ENCODE measurements at regions of chr15 and their contacts with region 1.

Region 1: GRCh38 chr15:78049691-78050440 is 27.6 kb downstream of the TBC1D2B start:
- DNase-seq: peak; percentile 75
- H3K4me3 Mint-ChIP-seq: peak overlapping the region; percentile 54
- H3K27ac Mint-ChIP-seq: peak overlapping the region; percentile 91
- H3K4me1 Mint-ChIP-seq: peaks cover 96% of the 10 kb centered on the region
- H3K27me3 Mint-ChIP-seq: no peaks in the 10 kb centered on the region

Region 2: DNA sequence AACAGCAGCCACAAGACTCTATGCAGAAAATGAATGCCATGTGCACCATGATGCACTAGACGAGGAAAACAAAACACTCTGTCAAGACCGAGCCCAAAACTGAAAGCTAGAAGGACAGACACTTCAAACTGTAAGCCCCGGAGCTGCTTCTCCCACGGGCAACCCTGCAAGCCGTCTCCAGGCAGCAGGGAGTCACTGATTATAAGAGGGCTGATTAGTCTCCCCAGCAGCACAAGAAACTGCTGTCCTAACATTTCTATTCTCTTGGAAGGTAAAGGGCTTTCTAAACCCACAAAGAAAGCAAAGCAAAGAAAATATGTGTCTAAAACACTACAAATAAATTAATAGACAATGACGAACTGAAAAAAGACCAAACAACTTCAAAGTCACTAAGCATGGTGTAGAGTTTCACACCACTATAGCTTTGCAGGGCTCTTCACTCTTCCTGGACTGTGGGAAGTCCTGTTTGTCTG is 12.1 kb after region 1 on chr15:
- CTCF ChIA-PET with region 1: interaction called, 125 read pairs
- POLR2A ChIA-PET with region 1: interaction called, 202 read pairs
- DNase-seq: no peak
- H3K4me3 Mint-ChIP-seq: peak overlapping the region; percentile 58
- H3K27ac Mint-ChIP-seq: peak overlapping the region; percentile 79
- H3K4me1 Mint-ChIP-seq: peaks cover 39% of the 10 kb centered on the region
- H3K27me3 Mint-ChIP-seq: no peaks in the 10 kb centered on the region

Region 3: GRCh38 chr15:78077058-78077877 is 27.4 kb after region 1 on chr15 and contains the start of gene TBC1D2B:
- CTCF ChIA-PET with region 1: interaction called, 125 read pairs
- POLR2A ChIA-PET with region 1: interaction called, 202 read pairs
- DNase-seq: peak; percentile 74
- H3K4me3 Mint-ChIP-seq: peak within 1 kb of the TSS; percentile 100
- H3K27ac Mint-ChIP-seq: peak within 1 kb of the TSS; percentile 89
- H3K4me1 Mint-ChIP-seq: peaks cover 48% of the 10 kb centered on the region
- H3K27me3 Mint-ChIP-seq: no peaks in the 10 kb centered on the region
- total RNA-seq, gene TBC1D2B: 97.1 to 101 TPM